Activated CD8-positive, alpha-beta T cell treated with anti-CD3 and anti-CD28 coated beads, Interleukin-2, amount 10 ng/mL, durations not matched to agents 7 days and 5 days (primary cell): ENCODE measurements at regions of chr11 and their contacts with region 1.

Region 1: DNA sequence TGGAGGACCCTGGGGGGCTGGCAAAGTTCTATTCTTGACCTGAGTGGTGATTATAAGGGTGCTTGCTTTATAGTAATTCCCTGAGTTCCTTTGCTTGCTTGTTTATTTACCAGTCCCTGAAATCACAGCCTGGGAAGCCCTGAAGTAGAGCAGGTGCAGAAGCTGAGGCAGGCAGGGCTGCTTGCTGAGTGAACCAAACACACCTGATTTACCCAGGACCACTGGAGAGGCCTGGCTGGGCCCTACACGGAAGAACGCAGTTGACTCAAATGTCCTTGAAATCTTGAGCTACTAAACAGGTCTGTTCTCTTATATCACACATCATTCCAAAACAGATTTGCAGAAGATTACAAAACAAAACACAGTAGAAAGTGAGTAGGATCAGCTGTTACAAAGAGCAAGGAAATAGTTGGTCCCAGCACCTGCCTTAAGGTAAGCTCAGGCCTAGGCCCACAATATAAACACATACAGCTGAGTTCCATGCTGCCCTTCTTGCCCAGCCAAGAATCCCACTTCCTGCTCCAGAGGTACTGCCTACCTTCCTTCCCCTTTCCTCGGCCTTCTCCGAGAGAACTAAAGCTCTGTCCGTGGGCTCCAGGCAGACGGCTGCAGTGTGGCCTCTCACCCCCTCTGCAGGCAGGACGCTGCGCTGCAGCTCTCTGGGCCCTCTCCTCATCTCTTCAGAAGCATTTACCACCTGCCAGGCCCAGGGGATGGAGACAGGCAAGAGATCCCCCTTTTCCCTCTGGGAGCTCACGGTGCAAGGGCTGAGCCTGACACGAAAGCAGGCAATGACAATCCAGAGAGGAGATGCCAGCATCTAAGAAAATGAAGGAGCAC is 46.1 kb upstream of the SCUBE2 start:
- DNase-seq: peak; percentile 74
- ATAC-seq: peak; percentile 91
- H3K4me3 Mint-ChIP-seq: no peak overlapping the region
- H3K27ac Mint-ChIP-seq: no peak overlapping the region
- H3K4me1 Mint-ChIP-seq: peaks cover 5% of the 10 kb centered on the region
- H3K27me3 Mint-ChIP-seq: no peaks in the 10 kb centered on the region

Region 2: GRCh38 chr11:8911029-8911826 is 226.3 kb before region 1 on chr11 and contains the start of gene AKIP1:
- CTCF ChIA-PET with region 1: interaction called, 36 read pairs
- POLR2A ChIA-PET with region 1: no interaction called
- DNase-seq: peak; percentile 88
- ATAC-seq: peak; percentile 82
- H3K4me3 Mint-ChIP-seq: peak within 1 kb of the TSS; percentile 93
- H3K27ac Mint-ChIP-seq: peak within 1 kb of the TSS; percentile 85
- H3K4me1 Mint-ChIP-seq: peaks cover 42% of the 10 kb centered on the region
- H3K27me3 Mint-ChIP-seq: peaks cover 11% of the 10 kb centered on the region
- total RNA-seq, gene AKIP1: 26.8 to 27.2 TPM

Region 3: DNA sequence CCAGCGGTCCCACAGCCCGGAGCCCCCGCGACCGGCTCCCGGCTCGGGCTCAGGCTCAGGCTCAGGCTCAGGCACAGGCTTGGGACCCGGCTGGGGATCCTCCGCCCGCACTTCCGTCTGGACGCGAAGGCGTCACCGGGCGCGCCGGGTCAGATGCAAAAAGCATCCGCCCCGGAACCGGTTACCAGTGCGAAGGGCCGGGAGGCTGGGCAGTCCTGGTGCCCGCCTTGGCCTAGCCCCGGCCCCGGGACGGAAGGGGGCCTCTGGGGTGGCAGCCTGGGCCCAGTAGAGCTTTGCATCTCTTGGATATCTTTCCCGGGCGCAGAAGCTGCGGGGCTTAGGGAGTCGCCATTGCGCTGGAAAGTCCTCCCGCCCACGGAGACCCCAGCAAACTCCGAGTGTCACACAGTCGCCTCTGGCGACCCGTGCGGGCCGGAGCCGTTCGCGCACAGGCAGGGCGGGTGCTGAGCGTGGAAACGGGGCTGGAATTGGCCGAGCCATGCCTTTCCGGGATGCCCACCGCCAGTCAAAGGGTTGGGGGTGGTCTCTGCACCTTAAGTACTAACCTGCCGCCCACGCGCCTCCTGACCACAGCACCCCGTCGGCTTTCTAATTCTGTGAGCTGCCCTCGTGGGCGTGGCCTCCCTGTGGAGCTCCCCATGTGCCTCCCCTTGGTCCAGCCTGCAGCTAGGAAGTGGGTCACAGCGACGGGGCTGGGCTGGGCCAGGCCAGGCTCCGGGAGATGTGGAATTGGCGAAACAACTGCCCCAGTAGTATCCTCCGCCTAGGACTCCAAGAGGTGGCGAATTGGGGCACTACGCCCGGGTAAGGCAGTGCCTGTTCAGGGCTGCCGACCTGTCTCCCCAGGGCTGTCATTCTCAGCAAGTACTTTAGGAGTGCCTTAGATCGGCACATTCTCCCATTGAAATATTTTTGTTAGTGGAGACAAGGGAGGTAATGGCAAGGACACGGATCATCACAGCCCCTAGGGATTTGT is 172.9 kb before region 1 on chr11 and contains the start of gene TMEM9B:
- CTCF ChIA-PET with region 1: interaction called, 23 read pairs
- POLR2A ChIA-PET with region 1: no interaction called
- DNase-seq: peak; percentile 88
- ATAC-seq: peak; percentile 89
- H3K4me3 Mint-ChIP-seq: peak within 1 kb of the TSS; percentile 94
- H3K27ac Mint-ChIP-seq: peak within 1 kb of the TSS; percentile 94
- H3K4me1 Mint-ChIP-seq: peaks cover 27% of the 10 kb centered on the region
- H3K27me3 Mint-ChIP-seq: no peaks in the 10 kb centered on the region
- total RNA-seq, gene TMEM9B: 28.9 to 30.9 TPM

Region 4: GRCh38 chr11:9015677-9016076 is 121.8 kb before region 1 on chr11:
- CTCF ChIA-PET with region 1: interaction called, 149 read pairs
- POLR2A ChIA-PET with region 1: no interaction called
- DNase-seq: peak; percentile 73
- ATAC-seq: peak; percentile 93
- H3K4me3 Mint-ChIP-seq: no peak overlapping the region
- H3K27ac Mint-ChIP-seq: no peak overlapping the region
- H3K4me1 Mint-ChIP-seq: peaks cover 20% of the 10 kb centered on the region
- H3K27me3 Mint-ChIP-seq: peaks cover 15% of the 10 kb centered on the region

Region 5: DNA sequence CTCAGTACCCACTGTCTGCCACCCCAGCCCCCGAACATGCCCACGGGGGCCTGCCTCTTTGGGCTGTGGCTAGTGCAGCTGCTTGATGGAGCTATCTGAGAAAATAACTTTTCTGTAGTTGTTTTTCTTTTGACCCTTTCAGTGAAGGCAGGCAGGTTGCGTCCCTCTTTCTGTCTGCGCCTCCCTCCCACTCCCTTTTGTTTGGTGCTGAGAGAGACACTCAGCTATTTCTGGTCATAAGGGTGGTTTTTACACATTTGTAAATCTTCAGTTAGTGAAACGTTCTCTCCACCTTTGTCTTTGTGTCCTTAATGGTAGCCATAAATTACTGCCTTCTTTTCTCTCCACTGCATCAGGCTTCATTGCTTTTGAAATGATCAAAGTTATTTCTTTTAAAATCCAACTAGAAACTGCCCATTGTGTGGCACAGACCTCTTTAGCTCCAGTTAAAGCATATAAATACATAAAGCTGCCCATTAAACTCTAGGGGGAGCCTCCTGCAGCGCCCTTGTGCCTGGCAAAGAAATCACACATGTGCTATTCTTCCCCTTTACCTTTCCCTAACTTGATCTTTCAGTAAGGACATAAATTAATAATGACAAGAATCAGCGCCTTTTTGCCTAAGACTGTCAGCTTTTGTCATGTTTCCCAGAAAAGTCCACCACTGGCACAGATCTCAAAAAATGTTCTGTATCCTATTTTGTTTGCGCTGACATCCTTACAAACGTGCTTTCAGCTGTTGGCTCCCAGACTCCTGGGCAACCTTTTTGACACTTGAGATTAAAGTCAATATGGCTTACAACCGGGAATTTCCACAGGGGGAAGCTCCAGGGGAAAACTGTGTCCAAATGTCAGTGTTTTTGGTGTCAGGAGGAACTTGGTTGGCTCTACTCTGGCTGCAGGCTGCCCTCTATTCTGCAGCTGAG is 44.4 kb before region 1 on chr11:
- CTCF ChIA-PET with region 1: interaction called, 25 read pairs
- POLR2A ChIA-PET with region 1: no interaction called
- DNase-seq: no peak
- ATAC-seq: no peak
- H3K4me3 Mint-ChIP-seq: no peak overlapping the region
- H3K27ac Mint-ChIP-seq: no peak overlapping the region
- H3K4me1 Mint-ChIP-seq: peaks cover 4% of the 10 kb centered on the region
- H3K27me3 Mint-ChIP-seq: peaks cover 51% of the 10 kb centered on the region

Region 6: GRCh38 chr11:9118277-9118676 is 19.2 kb before region 1 on chr11:
- CTCF ChIA-PET with region 1: interaction called, 15 read pairs
- POLR2A ChIA-PET with region 1: no interaction called
- DNase-seq: no peak
- ATAC-seq: no peak
- H3K4me3 Mint-ChIP-seq: no peak overlapping the region
- H3K27ac Mint-ChIP-seq: no peak overlapping the region
- H3K4me1 Mint-ChIP-seq: no peaks in the 10 kb centered on the region
- H3K27me3 Mint-ChIP-seq: no peaks in the 10 kb centered on the region

Region 7: DNA sequence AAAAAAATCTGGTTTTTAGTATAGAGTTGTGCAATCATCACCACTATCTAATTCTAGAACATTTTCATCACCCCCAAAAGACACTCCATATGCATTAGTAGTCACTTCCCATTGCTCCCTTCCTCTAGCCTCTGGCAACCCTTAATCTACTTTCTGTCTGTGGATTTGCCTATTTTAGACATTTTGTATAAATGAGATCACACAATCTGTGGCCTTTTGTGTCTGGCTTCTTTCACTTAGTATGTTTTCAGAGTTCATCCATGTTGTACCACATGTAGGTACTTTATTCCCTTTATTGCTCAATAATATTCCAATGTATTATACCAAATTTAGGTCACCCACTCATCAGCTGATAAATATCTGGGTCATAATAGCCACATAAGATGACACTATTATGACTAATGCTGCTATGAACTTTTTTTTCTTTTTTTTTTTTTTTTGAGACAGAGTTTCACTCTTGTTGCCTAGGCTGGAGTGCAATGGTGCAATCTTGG is 21.4 kb after region 1 on chr11:
- CTCF ChIA-PET with region 1: interaction called, 11 read pairs
- POLR2A ChIA-PET with region 1: no interaction called
- DNase-seq: no peak
- ATAC-seq: no peak
- H3K4me3 Mint-ChIP-seq: no peak overlapping the region
- H3K27ac Mint-ChIP-seq: no peak overlapping the region
- H3K4me1 Mint-ChIP-seq: peaks cover 3% of the 10 kb centered on the region
- H3K27me3 Mint-ChIP-seq: no peaks in the 10 kb centered on the region